OCI-LY7 (cell line): ENCODE measurements at regions of chr1 and their contacts with region 1.

Region 1: GRCh38 chr1:63821091-63822005 is 47.5 kb downstream of the ROR1 start:
- DNase-seq: no peak
- H3K4me3 ChIP-seq: no peak overlapping the region
- H3K27ac ChIP-seq: no peak overlapping the region
- H3K4me1 ChIP-seq: no peaks in the 10 kb centered on the region
- CTCF ChIP-seq: no peak

Region 2: GRCh38 chr1:63593303-63593885 is 228.0 kb before region 1 on chr1 and contains the start of gene PGM1:
- CTCF ChIA-PET with region 1: no interaction called
- POLR2A ChIA-PET with region 1: no interaction called
- intact Hi-C with region 1: loop called (anchors 10 kb)
- DNase-seq: peak; percentile 85
- H3K4me3 ChIP-seq: peak within 1 kb of the TSS; percentile 94
- H3K27ac ChIP-seq: peak within 1 kb of the TSS; percentile 76
- H3K4me1 ChIP-seq: peaks cover 11% of the 10 kb centered on the region
- CTCF ChIP-seq: no peak
- total RNA-seq, gene PGM1: 39.2 and 43.2 TPM in 2 replicates

Region 3: DNA sequence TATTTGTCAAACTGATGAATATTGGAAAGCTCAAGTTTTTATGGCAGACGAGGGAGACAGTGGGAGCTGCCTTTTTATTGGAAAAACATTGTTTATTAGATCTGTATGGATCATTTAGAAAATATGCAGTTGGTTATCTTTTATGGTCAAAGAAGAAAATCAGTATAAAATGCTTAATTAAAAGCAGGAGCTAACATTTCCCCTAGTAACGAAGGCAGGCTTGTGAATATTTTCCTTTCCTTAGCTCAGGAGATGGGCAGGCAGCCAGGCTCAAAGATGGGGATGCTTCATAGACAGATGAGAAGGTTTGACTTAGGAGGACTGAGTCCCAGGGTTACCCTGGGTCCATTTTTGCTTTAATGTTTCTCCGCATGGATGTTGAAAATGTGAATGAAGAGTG is 21.5 kb before region 1 on chr1:
- CTCF ChIA-PET with region 1: no interaction called
- POLR2A ChIA-PET with region 1: no interaction called
- intact Hi-C with region 1: no loop called
- DNase-seq: no peak
- H3K4me3 ChIP-seq: no peak overlapping the region
- H3K27ac ChIP-seq: no peak overlapping the region
- H3K4me1 ChIP-seq: peaks cover 4% of the 10 kb centered on the region
- CTCF ChIP-seq: no peak

Region 4: DNA sequence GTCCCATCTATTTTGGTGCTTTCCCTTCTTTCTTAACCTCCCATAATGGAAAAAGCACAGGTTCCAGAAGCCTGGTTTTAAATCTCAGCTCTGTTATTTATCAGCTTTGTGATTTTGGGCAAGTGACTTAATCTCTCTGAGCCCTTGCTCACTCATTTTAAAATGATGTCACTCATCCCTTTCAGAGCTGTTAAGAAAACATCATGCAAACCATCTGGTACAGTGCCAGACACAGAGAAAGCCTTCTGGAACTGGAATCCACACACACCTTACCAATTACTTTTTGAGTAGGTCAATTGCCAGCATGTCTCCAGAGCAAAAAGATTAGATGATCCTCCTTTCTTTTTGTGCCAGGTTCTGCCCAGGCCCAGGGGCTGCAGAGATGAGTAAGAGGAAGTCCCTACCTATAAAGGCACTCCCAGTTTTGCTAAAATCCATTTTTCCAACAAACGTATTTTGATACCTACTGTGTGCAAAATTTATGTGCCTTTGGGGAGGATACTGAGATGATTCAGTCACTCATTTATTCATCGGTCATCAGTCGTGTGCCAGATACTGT is 13.8 kb after region 1 on chr1:
- CTCF ChIA-PET with region 1: interaction called, 3 read pairs
- POLR2A ChIA-PET with region 1: interaction called, 12 read pairs
- intact Hi-C with region 1: no loop called
- DNase-seq: no peak
- H3K4me3 ChIP-seq: no peak overlapping the region
- H3K27ac ChIP-seq: no peak overlapping the region
- H3K4me1 ChIP-seq: peaks cover 51% of the 10 kb centered on the region
- CTCF ChIP-seq: no peak